Tibial artery (tissue), 4 donors: ENCODE measurements at regions of chr1 and their contacts with region 1.

Region 1: DNA sequence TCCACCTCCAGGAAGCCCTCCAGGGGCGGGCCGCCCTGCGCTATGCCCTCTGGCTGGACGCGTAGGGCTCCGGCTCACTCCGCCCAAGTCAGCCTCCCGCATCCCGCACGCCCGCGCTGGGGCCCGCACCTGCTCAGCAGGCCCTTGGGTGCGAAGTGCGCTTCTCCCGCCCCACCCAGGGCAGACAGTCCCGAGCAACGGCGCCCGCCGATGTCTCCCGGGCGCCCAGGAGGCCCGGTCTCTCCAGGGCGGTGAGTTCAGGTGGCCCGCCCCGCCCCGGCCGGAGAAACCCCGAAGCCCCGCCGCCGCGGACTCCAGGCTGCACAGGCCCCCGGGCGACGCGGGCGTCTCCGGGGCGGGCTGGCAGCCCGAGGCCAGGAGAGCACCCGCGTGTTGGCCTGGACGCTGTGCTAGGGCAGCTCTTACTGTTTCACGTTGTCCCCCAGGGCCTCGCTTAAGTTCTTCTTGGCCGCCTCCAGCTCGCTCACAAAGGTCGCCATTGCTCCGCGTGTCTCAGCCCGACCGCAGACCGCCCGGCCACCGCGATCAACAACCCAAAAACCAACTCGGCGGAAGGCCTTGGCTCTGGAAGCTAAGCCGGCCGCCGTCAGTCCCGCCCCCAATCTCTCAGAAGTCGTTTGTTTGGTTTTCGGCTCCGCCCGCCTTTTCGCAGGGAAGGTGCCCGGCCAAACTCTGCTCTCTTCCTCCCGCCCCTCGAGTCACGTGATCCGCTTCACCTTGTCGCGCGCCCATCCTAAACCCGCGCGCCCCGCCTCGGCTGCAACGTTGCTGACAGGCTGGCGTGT is at the start of gene TADA1:
- DNase-seq: peak; percentile 99
- H3K4me3 ChIP-seq: peak within 1 kb of the TSS; percentile 86 to 89
- H3K27ac ChIP-seq: peak within 1 kb of the TSS; percentile 89 to 91
- H3K4me1 ChIP-seq: peaks cover 0 to 18% (median 12%) of the 10 kb centered on the region in 4 donors
- H3K27me3 ChIP-seq: no peaks in the 10 kb centered on the region
- CTCF ChIP-seq: no peak

Region 2: GRCh38 chr1:165467706-165468105 is 1408.2 kb before region 1 on chr1:
- intact Hi-C with region 1: no loop called
- DNase-seq: no peak
- H3K4me3 ChIP-seq: no peak overlapping the region
- H3K27ac ChIP-seq: no peak overlapping the region
- H3K4me1 ChIP-seq: no peaks in the 10 kb centered on the region
- H3K27me3 ChIP-seq: peaks cover 0 to 3% of the 10 kb centered on the region in 2 donors
- CTCF ChIP-seq: no peak

Region 3: GRCh38 chr1:166839600-166840308 is 36.2 kb before region 1 on chr1:
- intact Hi-C with region 1: loop called (anchors 5 kb)
- DNase-seq: peak; percentile 45 to 74
- H3K4me3 ChIP-seq: peak overlapping the region; percentile 63 to 84
- H3K27ac ChIP-seq: peak overlapping the region; percentile 87
- H3K4me1 ChIP-seq: peaks cover 0 to 56% (median 51%) of the 10 kb centered on the region in 4 donors
- H3K27me3 ChIP-seq: no peaks in the 10 kb centered on the region
- CTCF ChIP-seq: no peak

Region 4: GRCh38 chr1:167076136-167076710 is 200.3 kb after region 1 on chr1:
- intact Hi-C with region 1: no loop called
- DNase-seq: no peak
- H3K4me3 ChIP-seq: no peak overlapping the region
- H3K27ac ChIP-seq: no peak overlapping the region
- H3K4me1 ChIP-seq: no peaks in the 10 kb centered on the region
- H3K27me3 ChIP-seq: peaks cover 0 to 10% of the 10 kb centered on the region in 2 donors
- CTCF ChIP-seq: no peak

Region 5: DNA sequence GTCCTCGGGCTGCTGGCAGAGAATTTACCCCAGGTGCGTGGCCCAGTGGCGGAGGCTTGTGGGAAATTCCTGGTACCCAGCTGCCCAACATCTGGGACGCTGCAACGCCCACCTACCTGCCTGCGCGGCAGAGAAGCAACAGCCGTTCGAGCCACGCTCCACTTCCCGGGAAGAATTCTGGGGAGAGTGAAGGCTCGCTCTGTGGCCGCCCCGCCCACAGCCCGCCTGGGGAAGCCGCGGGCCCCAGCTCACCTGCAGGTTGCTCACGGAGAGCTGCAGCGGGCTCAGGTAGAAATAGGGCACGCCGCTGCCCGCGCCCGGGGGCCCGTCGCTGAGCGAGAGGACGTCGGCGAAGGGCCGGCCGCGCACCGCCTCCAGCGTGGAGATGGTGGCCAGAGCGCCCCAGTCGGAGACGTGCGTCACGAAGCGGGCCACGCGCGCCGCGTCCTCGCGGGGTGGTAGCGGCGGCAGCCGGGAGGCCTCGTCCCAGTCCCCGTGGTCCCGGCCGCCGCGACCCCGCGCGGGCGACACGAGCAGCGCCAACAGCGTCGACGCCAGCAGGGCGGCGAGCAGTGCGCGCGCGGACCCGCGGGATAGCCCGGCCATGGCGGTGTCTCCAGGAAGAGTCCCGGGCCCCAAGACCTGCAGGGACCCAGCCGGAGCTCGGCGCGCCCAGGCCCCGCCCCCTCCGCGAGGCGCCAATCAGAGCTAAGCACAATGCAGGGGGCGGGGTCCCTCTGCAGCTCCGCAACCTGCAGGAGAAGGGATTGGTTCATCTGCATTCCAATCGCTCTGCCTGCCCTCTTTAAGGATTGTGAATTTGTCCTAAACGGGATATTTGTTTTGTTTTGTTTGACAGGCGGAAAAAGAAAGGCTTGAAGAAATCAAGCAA is 677.4 kb after region 1 on chr1 and contains the start of gene CREG1:
- intact Hi-C with region 1: loop called (anchors 5 kb)
- DNase-seq: peak; percentile 94 to 96
- H3K4me3 ChIP-seq: peak within 1 kb of the TSS; percentile 85
- H3K27ac ChIP-seq: peak within 1 kb of the TSS; percentile 75 to 76
- H3K4me1 ChIP-seq: peaks cover 0 to 31% (median 21%) of the 10 kb centered on the region in 4 donors
- H3K27me3 ChIP-seq: no peaks in the 10 kb centered on the region
- CTCF ChIP-seq: no peak